Dendritic cell treated with granulocyte-macrophage colony-stimulating factor and Interleukin-4, amounts not matched to agents 40 ng/mL and 50 ng/mL, for 4 days (primary cell): ENCODE measurements at regions of chr1 and their contacts with region 1.

Region 1: GRCh38 chr1:160101037-160101716 is 2.8 kb upstream of the IGSF8 start:
- H3K4me3 Mint-ChIP-seq: no peak overlapping the region
- H3K27ac Mint-ChIP-seq: peak overlapping the region; percentile 57
- H3K4me1 Mint-ChIP-seq: peaks cover 85% of the 10 kb centered on the region
- H3K27me3 Mint-ChIP-seq: no peaks in the 10 kb centered on the region

Region 2: GRCh38 chr1:160161965-160162705 is 61.0 kb after region 1 on chr1:
- intact Hi-C with region 1: loop called (anchors 5 kb)
- H3K4me3 Mint-ChIP-seq: no peak overlapping the region
- H3K27ac Mint-ChIP-seq: peak overlapping the region; percentile 58
- H3K4me1 Mint-ChIP-seq: peaks cover 56% of the 10 kb centered on the region
- H3K27me3 Mint-ChIP-seq: peaks cover 4% of the 10 kb centered on the region

Region 3: GRCh38 chr1:160204526-160205241 is 103.5 kb after region 1 on chr1:
- intact Hi-C with region 1: loop called (anchors 5 kb)
- H3K4me3 Mint-ChIP-seq: peak overlapping the region; percentile 96
- H3K27ac Mint-ChIP-seq: peak overlapping the region; percentile 69
- H3K4me1 Mint-ChIP-seq: peaks cover 76% of the 10 kb centered on the region
- H3K27me3 Mint-ChIP-seq: no peaks in the 10 kb centered on the region

Region 4: GRCh38 chr1:160219062-160219929 is 118.1 kb after region 1 on chr1:
- intact Hi-C with region 1: loop called (anchors 1 kb)
- H3K4me3 Mint-ChIP-seq: no peak overlapping the region
- H3K27ac Mint-ChIP-seq: no peak overlapping the region
- H3K4me1 Mint-ChIP-seq: peaks cover 29% of the 10 kb centered on the region
- H3K27me3 Mint-ChIP-seq: no peaks in the 10 kb centered on the region

Region 5: DNA sequence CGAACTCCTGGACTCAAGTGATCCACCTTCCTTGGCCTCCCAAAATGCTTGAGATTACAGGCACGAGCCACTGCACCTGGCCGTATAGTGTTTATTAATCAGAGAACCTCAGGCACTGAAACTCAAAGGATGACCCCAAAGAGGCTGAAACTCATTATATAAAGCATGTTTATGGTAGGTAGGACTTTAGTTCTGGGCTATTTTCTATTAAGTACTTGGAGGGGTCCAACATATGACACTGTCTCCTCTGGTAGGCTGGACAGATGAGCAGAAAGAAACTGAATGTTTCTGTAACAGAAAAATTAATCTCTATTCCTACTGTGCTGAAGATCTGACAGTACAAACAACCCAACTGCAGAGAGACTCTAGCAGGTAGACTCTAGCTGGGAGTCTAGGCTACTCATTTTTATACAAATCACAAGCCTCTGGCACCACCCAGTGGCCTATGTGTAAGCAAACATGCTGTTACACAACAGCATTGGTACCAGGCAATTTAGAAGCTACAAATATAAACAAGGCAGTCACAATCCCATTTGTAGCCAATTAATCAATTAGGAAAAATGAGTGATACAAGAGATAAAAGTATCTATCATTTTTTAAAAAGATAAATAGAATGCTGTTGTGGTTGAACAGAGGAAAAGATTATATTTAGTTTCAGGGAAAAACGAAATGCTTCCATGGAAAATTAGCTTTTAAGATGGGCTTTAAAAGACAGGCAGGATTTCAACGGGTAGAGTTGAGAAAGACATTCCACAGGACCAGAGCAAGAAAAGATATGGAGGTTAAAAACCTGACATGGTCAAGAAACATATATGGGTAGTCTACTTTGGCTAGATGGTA is 150.7 kb after region 1 on chr1:
- intact Hi-C with region 1: loop called (anchors 5 kb)
- H3K4me3 Mint-ChIP-seq: no peak overlapping the region
- H3K27ac Mint-ChIP-seq: no peak overlapping the region
- H3K4me1 Mint-ChIP-seq: no peaks in the 10 kb centered on the region
- H3K27me3 Mint-ChIP-seq: no peaks in the 10 kb centered on the region

Region 6: GRCh38 chr1:160291248-160292220 is 190.4 kb after region 1 on chr1:
- intact Hi-C with region 1: loop called (anchors 2 kb)
- H3K4me3 Mint-ChIP-seq: no peak overlapping the region
- H3K27ac Mint-ChIP-seq: peak overlapping the region; percentile 11
- H3K4me1 Mint-ChIP-seq: peaks cover 21% of the 10 kb centered on the region
- H3K27me3 Mint-ChIP-seq: no peaks in the 10 kb centered on the region

Region 7: DNA sequence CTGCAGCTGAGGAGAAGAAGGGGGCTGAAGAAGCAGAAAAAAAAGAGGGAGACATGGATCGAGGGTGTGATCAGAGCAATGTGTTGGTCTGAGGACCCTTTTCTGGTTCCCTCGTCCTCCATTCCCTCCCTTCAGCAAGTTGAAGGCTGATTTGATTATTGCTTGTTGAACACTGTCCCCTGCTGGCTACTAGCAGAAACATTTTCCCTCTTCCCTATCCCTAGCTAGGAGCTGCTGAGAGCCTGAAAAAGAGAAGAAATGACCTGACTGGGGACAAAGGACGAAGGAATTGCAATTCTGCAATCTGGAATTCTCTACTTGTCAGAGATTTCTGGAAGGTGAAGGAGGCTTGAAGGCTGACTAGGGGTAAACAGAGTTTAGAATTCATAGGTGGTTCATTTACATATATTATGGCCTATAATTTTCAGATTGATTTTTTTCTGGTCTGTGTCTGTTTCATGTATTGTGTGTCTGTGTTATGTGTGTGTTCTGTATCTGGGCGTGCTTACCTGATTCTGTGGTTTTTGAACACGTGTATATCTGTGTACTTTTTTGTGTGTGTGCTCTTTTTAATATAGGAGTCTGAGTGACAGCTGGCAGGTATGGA is 275.5 kb after region 1 on chr1:
- intact Hi-C with region 1: loop called (anchors 5 kb)
- H3K4me3 Mint-ChIP-seq: no peak overlapping the region
- H3K27ac Mint-ChIP-seq: peak overlapping the region; percentile 83
- H3K4me1 Mint-ChIP-seq: peaks cover 66% of the 10 kb centered on the region
- H3K27me3 Mint-ChIP-seq: peaks cover 1% of the 10 kb centered on the region

Region 8: GRCh38 chr1:160558660-160559380 is 457.6 kb after region 1 on chr1:
- intact Hi-C with region 1: no loop called
- H3K4me3 Mint-ChIP-seq: peak overlapping the region; percentile 7
- H3K27ac Mint-ChIP-seq: peak overlapping the region; percentile 82
- H3K4me1 Mint-ChIP-seq: peaks cover 71% of the 10 kb centered on the region
- H3K27me3 Mint-ChIP-seq: no peaks in the 10 kb centered on the region